CD4-positive, alpha-beta memory T cell (primary cell): ENCODE measurements at regions of chr16 and their contacts with region 1.

Region 1: DNA sequence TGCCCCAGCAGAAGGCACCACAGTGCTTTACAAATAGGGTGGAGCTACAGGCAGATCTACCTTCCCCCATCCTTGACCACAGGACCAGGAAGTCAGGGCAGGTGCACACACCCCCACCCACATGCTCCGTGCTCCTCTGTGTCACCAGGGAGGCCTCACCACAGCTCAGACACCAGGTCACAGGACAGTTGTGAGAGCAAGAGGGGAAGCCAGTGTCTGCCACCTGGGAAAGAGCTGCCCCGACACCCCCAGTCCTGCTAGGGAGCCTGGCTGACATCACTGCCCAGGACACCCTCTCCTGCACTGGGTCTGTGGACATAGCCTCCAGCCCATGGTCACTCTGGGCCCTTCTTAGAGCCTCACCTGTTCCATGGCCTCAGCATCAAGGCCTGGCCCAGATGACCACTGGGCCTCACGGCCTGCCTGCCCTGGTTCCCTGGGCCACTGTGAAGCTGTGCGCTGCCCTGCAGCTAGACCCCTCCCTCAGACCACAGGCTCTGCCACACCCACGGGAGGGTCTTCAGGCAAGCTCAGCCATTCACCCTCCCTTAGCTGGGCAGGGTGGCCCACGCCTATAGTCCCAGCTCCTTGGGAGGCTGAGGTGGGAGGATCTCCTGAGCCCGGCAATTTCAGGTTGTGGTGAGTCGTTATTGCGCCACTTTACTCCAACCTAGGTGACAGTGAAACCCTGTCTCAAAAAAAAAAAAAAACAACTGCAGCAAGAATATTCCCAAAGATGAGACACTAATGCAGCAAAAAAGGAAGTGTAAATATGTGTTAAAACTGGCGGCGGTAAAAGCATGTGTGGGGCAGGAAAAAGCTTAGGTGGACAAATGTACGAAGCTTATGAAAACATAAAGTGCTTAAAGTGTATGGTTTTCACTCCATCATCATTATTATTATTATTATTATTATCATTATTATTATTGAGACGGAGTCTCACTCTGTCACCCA is 14.2 kb downstream of the POLR3K start:
- DNase-seq: peak; percentile 49 to 79 (median 52)
- H3K4me3 ChIP-seq: no peak overlapping the region
- H3K4me3 Mint-ChIP-seq: peak overlapping the region in 7 of 8 donors; percentile 32 to 67 (median 51)
- H3K27ac ChIP-seq: peak overlapping the region; percentile 23
- H3K27ac Mint-ChIP-seq: peak overlapping the region; percentile 31 to 90 (median 80)
- H3K4me1 ChIP-seq: peaks cover 30% of the 10 kb centered on the region
- H3K4me1 Mint-ChIP-seq: peaks cover 34 to 50% (median 43%) of the 10 kb centered on the region in 4 donors
- H3K27me3 ChIP-seq: no peaks in the 10 kb centered on the region
- H3K27me3 Mint-ChIP-seq: no peaks in the 10 kb centered on the region

Region 2: GRCh38 chr16:77807-78443 is 38.7 kb after region 1 on chr16 and contains the start of gene MPG:
- CTCF ChIA-PET with region 1: no interaction called
- POLR2A ChIA-PET with region 1: no interaction called
- intact Hi-C with region 1: no loop called
- DNase-seq: peak; percentile 78 to 84 (median 79)
- H3K4me3 ChIP-seq: peak within 1 kb of the TSS; percentile 49 to 52
- H3K4me3 Mint-ChIP-seq: peak within 1 kb of the TSS; percentile 86 to 91 (median 90)
- H3K27ac ChIP-seq: peak within 1 kb of the TSS; percentile 65
- H3K27ac Mint-ChIP-seq: peak within 1 kb of the TSS; percentile 68 to 91 (median 78)
- H3K4me1 ChIP-seq: peaks cover 26% of the 10 kb centered on the region
- H3K4me1 Mint-ChIP-seq: peaks cover 11 to 41% (median 30%) of the 10 kb centered on the region in 4 donors
- H3K27me3 ChIP-seq: peaks cover 6% of the 10 kb centered on the region
- H3K27me3 Mint-ChIP-seq: peaks cover 4% of the 10 kb centered on the region in 2 donors
- total RNA-seq, gene MPG: 30.7 TPM

Region 3: GRCh38 chr16:96935-97381 is 57.7 kb after region 1 on chr16:
- CTCF ChIA-PET with region 1: interaction called, 12 read pairs
- POLR2A ChIA-PET with region 1: no interaction called
- intact Hi-C with region 1: no loop called
- DNase-seq: peak; percentile 87 to 89 (median 87)
- H3K4me3 ChIP-seq: no peak overlapping the region
- H3K4me3 Mint-ChIP-seq: no peak overlapping the region
- H3K27ac ChIP-seq: no peak overlapping the region
- H3K27ac Mint-ChIP-seq: peak overlapping the region in 4 of 7 donors; percentile 4 to 67 (median 60)
- H3K4me1 ChIP-seq: no peaks in the 10 kb centered on the region
- H3K4me1 Mint-ChIP-seq: peaks cover 3 to 6% (median 4%) of the 10 kb centered on the region in 4 donors
- H3K27me3 ChIP-seq: no peaks in the 10 kb centered on the region
- H3K27me3 Mint-ChIP-seq: no peaks in the 10 kb centered on the region